Activated T-helper 2 cell treated with anti-CD3 and anti-CD28 coated beads, Interferon-gamma antibody, Interleukin-2, Interleukin-4, amounts not matched to agents 10 μg/mL and 5 μg/mL and 100 μg/mL, durations not matched to agents 14 hours and 24 hours and 36 hours (primary cell): ENCODE measurements at regions of chr11 and their contacts with region 1.

Region 1: DNA sequence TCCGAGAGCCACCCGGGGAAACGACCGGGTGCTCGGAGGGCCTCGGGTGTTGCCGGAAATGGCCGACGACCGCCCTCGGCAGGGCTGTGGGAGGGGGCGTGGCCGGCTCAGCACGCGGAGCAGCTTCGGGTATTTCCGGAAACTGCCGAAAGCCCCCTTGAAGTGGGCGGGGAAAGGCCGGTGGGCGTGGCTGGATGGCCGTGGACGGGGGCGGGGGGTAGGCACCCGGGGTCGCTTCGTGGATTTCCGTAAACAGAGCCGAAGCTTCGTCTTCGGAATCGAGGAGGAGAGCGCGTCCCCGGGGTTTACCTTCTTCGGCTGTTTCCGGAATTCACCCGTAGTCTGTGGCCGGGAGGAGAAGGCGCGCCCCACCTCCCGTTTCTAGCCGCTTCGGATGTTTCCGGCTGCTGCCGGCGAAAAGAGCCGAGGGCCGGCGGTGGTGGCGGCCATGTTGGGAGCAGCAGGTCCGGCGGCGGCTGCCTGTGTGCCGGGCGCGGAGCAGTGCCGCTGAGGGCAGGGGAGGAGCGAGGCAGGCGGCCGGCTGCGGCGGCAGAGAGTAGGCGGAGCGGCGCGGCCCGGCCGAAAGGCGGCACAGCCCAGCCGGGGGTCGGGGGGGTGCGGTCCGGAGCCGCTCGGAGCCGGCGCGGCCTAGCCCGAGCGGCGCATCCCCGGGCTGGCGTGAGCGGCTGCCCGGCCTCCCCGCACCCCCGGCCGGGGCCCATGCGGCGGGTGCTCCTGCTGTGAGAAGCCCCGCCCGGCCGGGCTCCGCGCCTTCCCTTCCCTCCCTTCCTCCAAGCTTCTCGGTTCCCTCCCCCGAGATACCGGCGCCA is at the start of gene MARK2:
- DNase-seq: peak; percentile 99
- H3K4me3 Mint-ChIP-seq: peak within 1 kb of the TSS; percentile 87
- H3K27ac Mint-ChIP-seq: peak within 1 kb of the TSS; percentile 85
- H3K4me1 Mint-ChIP-seq: peaks cover 48% of the 10 kb centered on the region
- H3K27me3 Mint-ChIP-seq: no peaks in the 10 kb centered on the region
- total RNA-seq, gene MARK2: 36.5 and 38.8 TPM in 2 replicates

Region 2: GRCh38 chr11:63866211-63866610 is 27.3 kb after region 1 on chr11:
- intact Hi-C with region 1: loop called (anchors 1 kb)
- DNase-seq: peak; percentile 58
- H3K4me3 Mint-ChIP-seq: peak overlapping the region; percentile 31
- H3K27ac Mint-ChIP-seq: peak overlapping the region; percentile 58
- H3K4me1 Mint-ChIP-seq: peaks cover 62% of the 10 kb centered on the region
- H3K27me3 Mint-ChIP-seq: no peaks in the 10 kb centered on the region

Region 3: GRCh38 chr11:63906585-63906984 is 67.7 kb after region 1 on chr11:
- intact Hi-C with region 1: loop called (anchors 1 kb)
- DNase-seq: no peak
- H3K4me3 Mint-ChIP-seq: no peak overlapping the region
- H3K27ac Mint-ChIP-seq: no peak overlapping the region
- H3K4me1 Mint-ChIP-seq: peaks cover 2% of the 10 kb centered on the region
- H3K27me3 Mint-ChIP-seq: no peaks in the 10 kb centered on the region

Region 4: GRCh38 chr11:63945477-63946163 is 106.7 kb after region 1 on chr11:
- intact Hi-C with region 1: loop called (anchors 1 kb)
- DNase-seq: peak; percentile 26
- H3K4me3 Mint-ChIP-seq: no peak overlapping the region
- H3K27ac Mint-ChIP-seq: no peak overlapping the region
- H3K4me1 Mint-ChIP-seq: peaks cover 11% of the 10 kb centered on the region
- H3K27me3 Mint-ChIP-seq: no peaks in the 10 kb centered on the region

Region 5: GRCh38 chr11:64148200-64148916 is 309.5 kb after region 1 on chr11:
- intact Hi-C with region 1: loop called (anchors 2 kb)
- DNase-seq: peak; percentile 44
- H3K4me3 Mint-ChIP-seq: no peak overlapping the region
- H3K27ac Mint-ChIP-seq: no peak overlapping the region
- H3K4me1 Mint-ChIP-seq: peaks cover 13% of the 10 kb centered on the region
- H3K27me3 Mint-ChIP-seq: no peaks in the 10 kb centered on the region